Heart left ventricle (tissue), 16 donors: ENCODE measurements at regions of chr3 and their contacts with region 1.

Region 1: GRCh38 chr3:17151598-17152373 is 267.0 kb downstream of the PLCL2 start:
- DNase-seq: no peak
- ATAC-seq: peak in 1 of 4 donors; percentile 18
- H3K4me3 ChIP-seq: no peak overlapping the region
- H3K27ac ChIP-seq: peak overlapping the region in 1 of 12 donors; percentile 12
- H3K4me1 ChIP-seq: peaks cover 0 to 11% (median 0%) of the 10 kb centered on the region in 12 donors
- H3K27me3 ChIP-seq: no peaks in the 10 kb centered on the region
- CTCF ChIP-seq: no peak
- POLR2A ChIP-seq: no peak

Region 2: DNA sequence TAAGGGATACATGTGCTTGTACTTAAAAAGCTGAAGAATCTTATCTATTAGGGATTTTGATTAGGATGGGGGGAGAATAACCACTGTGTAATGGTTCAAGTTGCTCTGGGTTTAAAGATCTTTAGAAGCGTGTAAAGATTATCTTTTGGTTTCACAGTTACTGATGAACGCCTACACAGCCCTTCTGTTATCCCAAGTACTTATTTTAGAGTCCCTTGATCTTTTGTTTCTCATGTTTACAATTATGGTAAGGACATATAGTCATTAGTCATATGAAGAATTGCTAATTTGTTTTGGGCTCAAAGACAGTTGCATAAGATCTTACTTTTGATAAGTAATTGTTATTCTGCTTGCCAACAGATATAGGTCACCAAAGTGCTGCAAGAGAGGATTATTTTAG is 106.9 kb before region 1 on chr3:
- intact Hi-C with region 1: loop called in 1 of 10 experiments (anchors 10 kb)
- DNase-seq: no peak
- ATAC-seq: no peak
- H3K4me3 ChIP-seq: no peak overlapping the region
- H3K27ac ChIP-seq: no peak overlapping the region
- H3K4me1 ChIP-seq: peaks cover 0 to 30% (median 7%) of the 10 kb centered on the region in 12 donors
- H3K27me3 ChIP-seq: no peaks in the 10 kb centered on the region
- CTCF ChIP-seq: no peak
- POLR2A ChIP-seq: no peak